CD14-positive monocyte (primary cell): ENCODE measurements at regions of chr3 and their contacts with region 1.

Region 1: DNA sequence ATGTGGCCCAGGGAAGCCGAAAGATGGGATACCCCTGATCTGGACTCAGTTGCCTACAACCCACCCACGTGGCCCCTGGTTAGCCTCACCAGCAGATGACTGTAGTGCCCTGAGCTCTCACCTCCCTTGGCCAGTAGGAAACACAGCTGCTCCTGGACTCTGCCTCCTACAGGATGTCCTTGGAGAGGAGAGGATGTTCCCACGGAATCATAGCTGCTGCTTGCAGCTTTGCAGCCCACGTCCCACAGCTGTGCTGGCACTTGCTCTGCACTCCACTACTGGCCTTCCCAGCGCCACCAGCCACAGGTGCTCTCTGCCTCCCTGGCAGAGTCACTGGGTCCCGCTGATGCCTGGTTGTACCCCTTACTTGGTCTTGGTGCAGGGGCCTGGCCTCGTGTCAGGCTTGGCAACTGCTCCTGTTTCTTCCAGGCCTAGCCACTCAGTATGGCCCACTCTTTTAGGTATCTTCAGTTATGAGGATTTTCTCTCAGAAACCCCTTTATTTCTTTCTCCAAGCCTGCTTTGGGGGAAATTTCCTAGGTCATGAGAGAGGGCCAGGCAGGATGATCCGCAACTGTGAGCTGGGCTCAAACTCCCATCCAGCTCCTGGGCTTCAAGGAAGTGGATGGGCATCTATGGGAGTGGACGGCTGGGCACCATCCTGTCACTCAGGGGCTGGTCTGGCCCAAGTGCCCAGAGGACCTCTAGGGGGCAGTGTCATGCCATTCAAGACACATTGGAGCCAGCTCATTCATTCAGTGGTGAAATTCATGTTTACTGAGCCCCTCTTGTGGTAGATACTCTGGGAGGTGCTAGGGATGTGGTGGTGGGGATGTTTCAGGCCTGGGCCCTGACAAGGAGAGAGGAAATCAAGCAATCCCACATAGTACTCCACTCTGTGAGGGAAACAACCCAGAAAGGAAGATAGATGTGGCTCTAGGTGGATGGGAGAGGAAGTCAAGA is 16.2 kb upstream of the VILL start:
- DNase-seq: peak; percentile 72 to 86 (median 81)
- H3K4me3 ChIP-seq: no peak overlapping the region
- H3K4me3 Mint-ChIP-seq: no peak overlapping the region
- H3K27ac ChIP-seq: no peak overlapping the region
- H3K27ac Mint-ChIP-seq: peak overlapping the region in 6 of 7 donors; percentile 10 to 86 (median 32)
- H3K4me1 ChIP-seq: peaks cover 17 to 21% of the 10 kb centered on the region in 2 donors
- H3K4me1 Mint-ChIP-seq: peaks cover 17% of the 10 kb centered on the region
- H3K27me3 ChIP-seq: no peaks in the 10 kb centered on the region
- H3K27me3 Mint-ChIP-seq: no peaks in the 10 kb centered on the region
- CTCF ChIP-seq: peak; percentile 87

Region 2: GRCh38 chr3:38004415-38005076 is 30.1 kb after region 1 on chr3:
- intact Hi-C with region 1: loop called (anchors 2 to 5 kb)
- DNase-seq: peak; percentile 32 to 43 (median 40)
- H3K4me3 ChIP-seq: no peak overlapping the region
- H3K4me3 Mint-ChIP-seq: no peak overlapping the region
- H3K27ac ChIP-seq: peak overlapping the region in 1 of 2 donors; percentile 49
- H3K27ac Mint-ChIP-seq: peak overlapping the region in 4 of 7 donors; percentile 19 to 82 (median 44)
- H3K4me1 ChIP-seq: peaks cover 0 to 12% of the 10 kb centered on the region in 2 donors
- H3K4me1 Mint-ChIP-seq: peaks cover 15% of the 10 kb centered on the region
- H3K27me3 ChIP-seq: no peaks in the 10 kb centered on the region
- H3K27me3 Mint-ChIP-seq: peaks cover 0 to 4% (median 2%) of the 10 kb centered on the region in 3 donors
- CTCF ChIP-seq: peak; percentile 47

Region 3: DNA sequence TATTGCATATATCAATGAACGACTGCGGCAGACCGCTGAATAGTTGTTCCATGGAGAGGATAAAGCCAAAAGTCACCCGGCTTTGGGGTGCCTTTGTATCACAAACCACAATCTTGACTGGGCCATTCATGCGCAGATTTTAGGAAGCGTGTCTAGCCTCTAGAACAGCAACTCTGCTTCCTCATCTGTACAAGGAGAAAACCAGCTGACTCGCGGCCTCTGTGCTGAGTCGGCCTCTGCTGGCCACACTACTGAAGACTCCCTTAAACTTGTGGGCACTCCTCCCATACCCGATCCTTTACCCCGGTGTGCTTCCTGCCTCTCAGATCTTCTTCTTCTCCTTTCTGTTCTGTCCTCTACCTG is 65.5 kb after region 1 on chr3:
- intact Hi-C with region 1: loop called in 1 of 2 experiments (anchors 5 kb)
- DNase-seq: peak; percentile 79 to 89 (median 84)
- H3K4me3 ChIP-seq: peak overlapping the region; percentile 42 to 77 (median 61)
- H3K4me3 Mint-ChIP-seq: peak overlapping the region; percentile 81 to 87
- H3K27ac ChIP-seq: peak overlapping the region; percentile 34 to 85
- H3K27ac Mint-ChIP-seq: peak overlapping the region; percentile 70 to 92 (median 86)
- H3K4me1 ChIP-seq: peaks cover 41 to 42% of the 10 kb centered on the region in 2 donors
- H3K4me1 Mint-ChIP-seq: peaks cover 44% of the 10 kb centered on the region
- H3K27me3 ChIP-seq: no peaks in the 10 kb centered on the region
- H3K27me3 Mint-ChIP-seq: peaks cover 0 to 4% (median 2%) of the 10 kb centered on the region in 3 donors
- CTCF ChIP-seq: peak; percentile 36

Region 4: GRCh38 chr3:38117748-38118420 is 143.5 kb after region 1 on chr3:
- intact Hi-C with region 1: loop called in 1 of 2 experiments (anchors 10 kb)
- DNase-seq: peak; percentile 58 to 76 (median 66)
- H3K4me3 ChIP-seq: no peak overlapping the region
- H3K4me3 Mint-ChIP-seq: no peak overlapping the region
- H3K27ac ChIP-seq: no peak overlapping the region
- H3K27ac Mint-ChIP-seq: peak overlapping the region in 2 of 7 donors; percentile 48 to 68
- H3K4me1 ChIP-seq: peaks cover 0 to 5% of the 10 kb centered on the region in 2 donors
- H3K4me1 Mint-ChIP-seq: peaks cover 14% of the 10 kb centered on the region
- H3K27me3 ChIP-seq: no peaks in the 10 kb centered on the region
- H3K27me3 Mint-ChIP-seq: peaks cover 3 to 10% (median 4%) of the 10 kb centered on the region in 3 donors
- CTCF ChIP-seq: peak; percentile 71